Activated T-helper 1 cell treated with anti-CD3 and anti-CD28 coated beads, Interleukin-12 subunit alpha, Interleukin-12 subunit beta, Interleukin-2, Interleukin-4 antibody, amounts not matched to agents 30 ng/mL and 10 ng/mL and 1 ng/mL, durations not matched to agents 14 hours and 24 hours and 36 hours (primary cell): ENCODE measurements at regions of chr17 and their contacts with region 1.

Region 1: DNA sequence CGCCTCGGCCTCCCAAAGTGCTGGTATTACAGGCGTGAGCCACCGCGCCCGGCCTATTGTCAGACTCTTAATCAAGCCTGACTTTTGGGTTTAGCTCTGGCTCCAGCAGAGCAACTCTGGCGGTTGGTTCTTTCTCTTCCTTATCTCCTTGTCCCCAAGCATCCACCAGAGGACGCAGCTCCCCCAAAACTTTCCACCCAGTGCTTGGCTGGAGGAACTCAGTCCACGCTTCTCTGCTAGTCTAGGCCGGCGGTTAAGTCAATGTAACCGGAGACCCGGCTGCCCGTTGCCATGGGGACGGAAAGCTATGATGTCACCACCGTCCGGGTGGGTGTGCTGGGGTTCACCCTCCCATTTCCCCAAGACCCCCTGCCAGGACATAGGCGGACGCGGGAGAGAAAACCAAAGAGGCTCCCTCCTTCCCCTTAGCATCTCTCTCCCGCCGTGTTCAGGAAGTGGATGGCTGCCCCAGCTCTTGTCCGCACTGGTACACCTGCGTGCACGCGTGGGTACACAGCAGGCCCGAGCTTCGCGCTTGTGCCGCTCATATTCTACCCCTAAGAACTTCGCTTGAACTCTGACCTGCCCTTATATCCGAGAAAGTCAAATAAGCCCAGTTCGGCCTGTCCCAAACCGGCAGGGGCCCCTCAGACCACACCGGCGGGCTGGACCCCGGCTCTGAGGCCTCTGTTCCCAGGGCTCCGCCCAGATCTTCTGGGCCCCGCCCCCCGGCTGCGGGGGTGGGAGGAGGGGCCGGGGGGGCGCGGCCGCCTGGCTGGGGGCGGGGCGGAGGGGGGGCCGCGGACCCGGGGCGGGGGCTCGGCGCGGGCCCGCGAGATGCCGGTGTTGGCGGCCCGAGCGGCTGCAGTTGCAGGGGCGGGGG is at the start of gene RND2:
- DNase-seq: peak; percentile 73
- H3K4me3 Mint-ChIP-seq: peak within 1 kb of the TSS; percentile 90
- H3K27ac Mint-ChIP-seq: peak within 1 kb of the TSS; percentile 84
- H3K4me1 Mint-ChIP-seq: peaks cover 16% of the 10 kb centered on the region
- H3K27me3 Mint-ChIP-seq: peaks cover 25% of the 10 kb centered on the region
- total RNA-seq, gene RND2: 0.07 TPM in 1 of 2 replicates, not detected in the other

Region 2: DNA sequence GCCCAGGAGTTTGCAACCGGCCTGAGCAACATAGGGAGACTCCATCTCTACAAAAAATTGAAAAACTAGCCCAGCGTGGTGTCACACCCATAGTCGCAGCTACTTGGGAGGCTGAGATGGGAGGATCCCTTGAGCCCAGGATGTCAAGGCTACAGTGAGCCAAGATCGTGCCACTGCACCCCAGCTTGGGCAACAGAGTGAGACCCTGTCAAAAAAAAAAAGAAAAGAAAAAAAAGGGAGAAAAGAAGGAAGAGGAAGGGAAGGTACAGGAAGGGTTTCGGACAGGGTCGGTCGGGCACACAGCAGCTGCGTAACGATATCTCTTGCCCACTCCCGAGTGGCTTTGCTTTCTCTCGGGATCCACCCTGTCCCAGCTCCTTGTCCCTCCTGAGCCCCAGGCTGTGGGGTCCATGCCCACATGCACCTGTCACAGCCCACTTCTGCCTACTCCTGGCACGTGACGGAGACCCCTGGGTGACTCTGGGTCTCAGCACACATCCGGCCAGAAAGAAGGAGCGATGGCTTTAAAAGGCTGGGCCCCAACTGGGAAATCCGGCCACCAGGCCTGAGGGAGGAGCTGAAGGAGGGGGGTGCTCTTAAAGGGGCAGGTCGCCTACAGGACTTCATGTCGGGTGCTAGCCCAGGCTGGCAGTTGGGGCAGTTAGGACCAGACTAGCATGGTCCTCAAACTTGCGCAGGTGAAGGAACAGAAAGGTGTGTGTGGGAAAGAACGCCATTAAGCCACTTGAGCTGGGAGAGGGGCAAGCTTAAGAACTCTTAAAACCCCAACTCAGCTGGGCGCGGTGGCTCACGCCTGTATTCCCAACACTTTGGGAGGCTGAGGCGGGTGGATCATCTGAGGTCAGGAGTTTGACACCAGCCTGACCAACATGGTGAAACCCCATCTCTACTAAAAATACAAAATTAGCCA is 830.4 kb before region 1 on chr17 and contains the start of gene GHDC:
- intact Hi-C with region 1: loop called (anchors 5 kb)
- DNase-seq: peak; percentile 80
- H3K4me3 Mint-ChIP-seq: peak within 1 kb of the TSS; percentile 96
- H3K27ac Mint-ChIP-seq: peak within 1 kb of the TSS; percentile 95
- H3K4me1 Mint-ChIP-seq: peaks cover 15% of the 10 kb centered on the region
- H3K27me3 Mint-ChIP-seq: no peaks in the 10 kb centered on the region
- total RNA-seq, gene GHDC: 15.2 and 15.5 TPM in 2 replicates

Region 3: DNA sequence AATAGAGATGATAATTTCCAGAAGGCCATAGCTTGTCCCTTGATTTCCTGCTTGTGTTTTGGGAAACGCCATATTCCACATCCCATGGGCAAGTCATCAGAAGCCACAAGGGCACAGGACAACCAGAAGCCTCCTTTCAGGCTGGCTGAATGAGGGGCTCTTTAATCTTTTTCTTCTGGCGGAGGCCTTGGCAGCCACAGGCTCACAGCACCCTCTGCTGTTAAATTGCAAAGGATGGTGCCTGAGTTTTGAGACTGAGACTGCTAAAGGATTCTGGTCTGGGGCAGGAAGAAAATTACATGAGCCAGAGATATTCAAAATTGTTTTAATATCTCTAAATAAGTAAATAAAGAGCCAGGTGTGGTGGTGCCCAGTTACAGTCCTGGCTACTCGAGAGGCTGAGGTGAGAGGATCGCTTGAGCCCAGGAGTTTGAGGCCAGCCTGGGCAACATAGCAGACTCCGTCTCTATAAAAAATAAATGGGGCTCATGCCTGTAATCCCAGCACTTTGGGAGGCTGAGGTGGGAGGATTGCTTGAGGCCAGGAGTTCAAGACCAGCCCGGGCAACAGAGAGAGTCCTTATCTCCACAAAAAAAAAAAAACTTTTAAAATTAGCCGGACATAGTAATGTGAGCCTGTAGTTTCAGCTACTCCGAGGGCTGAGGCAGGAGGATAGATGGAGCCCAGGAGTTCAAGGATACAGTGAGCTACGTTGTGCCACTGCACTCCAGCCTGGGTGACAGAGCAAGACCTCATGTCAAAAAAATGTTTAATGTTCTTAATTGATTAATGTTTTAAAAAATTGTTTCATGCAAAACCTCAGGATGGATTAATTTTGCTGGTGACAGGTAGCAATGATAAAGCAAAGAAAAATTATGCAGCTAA is 86.7 kb before region 1 on chr17:
- intact Hi-C with region 1: no loop called
- DNase-seq: no peak
- H3K4me3 Mint-ChIP-seq: no peak overlapping the region
- H3K27ac Mint-ChIP-seq: no peak overlapping the region
- H3K4me1 Mint-ChIP-seq: peaks cover 3% of the 10 kb centered on the region
- H3K27me3 Mint-ChIP-seq: peaks cover 16% of the 10 kb centered on the region

Region 4: DNA sequence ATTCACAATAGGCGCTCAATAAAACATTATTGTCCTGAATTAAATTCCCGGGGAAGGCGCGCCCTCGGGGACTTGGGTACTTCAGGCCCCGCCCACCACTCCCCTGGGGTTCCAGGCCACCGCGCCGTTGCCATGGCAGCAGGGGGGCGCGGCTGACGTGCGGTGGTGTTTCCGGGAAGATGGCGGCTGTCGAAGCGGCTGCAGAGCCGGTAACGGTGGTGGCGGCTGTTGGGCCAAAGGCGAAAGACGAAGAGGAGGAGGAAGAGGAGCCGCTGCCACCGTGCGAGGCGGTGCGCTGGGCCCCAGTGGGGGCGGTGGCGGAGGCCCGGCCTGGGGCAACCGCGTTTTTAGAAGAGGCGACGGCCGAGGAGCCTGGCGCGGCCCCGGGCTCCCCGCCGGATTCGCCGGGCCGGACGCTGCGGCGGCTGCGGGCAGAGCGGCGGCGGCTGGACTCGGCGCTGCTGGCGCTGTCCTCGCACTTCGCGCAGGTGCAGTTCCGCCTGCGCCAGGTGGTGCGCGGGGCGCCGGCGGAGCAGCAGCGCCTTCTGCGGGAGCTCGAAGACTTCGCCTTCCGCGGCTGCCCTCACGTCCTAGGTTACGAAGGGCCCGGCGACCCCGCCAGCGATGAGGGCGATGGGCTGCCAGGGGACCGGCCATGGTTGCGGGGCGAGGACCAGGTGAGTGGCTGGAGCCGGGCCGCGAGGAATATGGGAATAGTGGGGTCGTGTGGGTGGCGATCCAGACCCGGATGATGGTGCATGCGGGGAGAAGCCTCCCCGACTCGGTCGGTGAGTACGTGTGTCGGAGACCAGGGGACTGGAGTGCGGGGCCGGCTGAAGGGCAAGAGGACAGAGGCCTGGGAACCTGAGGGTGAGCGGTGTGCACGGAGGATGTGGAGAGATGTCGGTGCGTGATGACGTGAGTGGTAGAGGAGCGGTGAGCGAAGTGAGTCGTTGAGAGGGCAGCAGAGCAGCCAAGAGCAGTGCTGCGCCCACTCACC is 44.0 kb before region 1 on chr17 and contains the start of gene RUNDC1:
- intact Hi-C with region 1: loop called (anchors 1 kb)
- DNase-seq: peak; percentile 87
- H3K4me3 Mint-ChIP-seq: peak within 1 kb of the TSS; percentile 100
- H3K27ac Mint-ChIP-seq: peak within 1 kb of the TSS; percentile 99
- H3K4me1 Mint-ChIP-seq: peaks cover 42% of the 10 kb centered on the region
- H3K27me3 Mint-ChIP-seq: peaks cover 2% of the 10 kb centered on the region
- total RNA-seq, gene RUNDC1: 16.9 and 18.8 TPM in 2 replicates

Region 5: GRCh38 chr17:43006639-43007551 is 17.8 kb before region 1 on chr17 and contains the start of gene IFI35:
- intact Hi-C with region 1: loop called (anchors 2 kb)
- DNase-seq: peak; percentile 85
- H3K4me3 Mint-ChIP-seq: peak within 1 kb of the TSS; percentile 100
- H3K27ac Mint-ChIP-seq: peak within 1 kb of the TSS; percentile 99
- H3K4me1 Mint-ChIP-seq: peaks cover 21% of the 10 kb centered on the region
- H3K27me3 Mint-ChIP-seq: no peaks in the 10 kb centered on the region
- total RNA-seq, gene IFI35: 65.8 and 67.0 TPM in 2 replicates

Region 6: GRCh38 chr17:43211480-43212402 is 187.1 kb after region 1 on chr17 and contains the start of gene TMEM106A:
- intact Hi-C with region 1: loop called (anchors 5 kb)
- DNase-seq: peak; percentile 60
- H3K4me3 Mint-ChIP-seq: peak within 1 kb of the TSS; percentile 97
- H3K27ac Mint-ChIP-seq: peak within 1 kb of the TSS; percentile 90
- H3K4me1 Mint-ChIP-seq: peaks cover 35% of the 10 kb centered on the region
- H3K27me3 Mint-ChIP-seq: no peaks in the 10 kb centered on the region
- total RNA-seq, gene TMEM106A: 18.2 and 19.1 TPM in 2 replicates

Region 7: DNA sequence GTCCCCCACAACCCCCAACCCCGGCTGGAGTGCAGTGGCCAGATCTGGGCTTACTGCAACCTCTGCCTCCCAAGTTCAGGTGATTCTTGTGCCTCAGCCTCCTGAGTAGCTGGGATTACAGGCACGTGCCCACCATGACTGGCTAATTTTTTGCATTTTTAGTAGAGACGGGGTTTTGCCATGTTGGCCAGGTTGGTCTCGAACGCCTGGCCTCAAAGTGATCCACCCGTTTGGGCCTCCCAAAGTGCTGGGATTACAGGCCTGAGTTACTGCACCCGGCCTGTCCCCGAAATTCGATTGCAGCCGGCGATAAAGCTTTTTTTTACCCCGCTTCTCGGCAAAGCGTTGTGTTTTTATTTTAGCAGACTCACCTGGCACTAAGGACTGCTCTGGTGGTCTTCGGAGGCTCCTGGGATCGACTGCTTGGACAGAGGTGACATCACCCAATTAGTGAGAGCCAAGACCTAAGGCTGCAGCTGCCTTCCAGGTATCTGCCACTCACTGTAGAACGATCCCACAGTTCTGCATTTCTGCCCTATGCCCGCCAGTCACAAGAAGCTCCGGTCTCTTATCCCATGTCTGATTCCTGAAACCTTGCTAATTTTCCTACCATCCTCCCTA is 292.0 kb after region 1 on chr17:
- intact Hi-C with region 1: loop called (anchors 10 kb)
- DNase-seq: peak; percentile 38
- H3K4me3 Mint-ChIP-seq: no peak overlapping the region
- H3K27ac Mint-ChIP-seq: peak overlapping the region; percentile 77
- H3K4me1 Mint-ChIP-seq: peaks cover 24% of the 10 kb centered on the region
- H3K27me3 Mint-ChIP-seq: peaks cover 2% of the 10 kb centered on the region